Activated B cell treated with CpG ODN at 0.5 μM for 24 hours (primary cell): ENCODE measurements at regions of chr12 and their contacts with region 1.

Region 1: GRCh38 chr12:119980242-119980641 is 8.8 kb upstream of the BICDL1 start:
- DNase-seq: no peak
- ATAC-seq: no peak
- H3K4me3 Mint-ChIP-seq: no peak overlapping the region
- H3K27ac Mint-ChIP-seq: no peak overlapping the region
- H3K4me1 Mint-ChIP-seq: no peaks in the 10 kb centered on the region
- H3K27me3 Mint-ChIP-seq: peaks cover 30% of the 10 kb centered on the region
- CTCF ChIP-seq: no peak

Region 2: DNA sequence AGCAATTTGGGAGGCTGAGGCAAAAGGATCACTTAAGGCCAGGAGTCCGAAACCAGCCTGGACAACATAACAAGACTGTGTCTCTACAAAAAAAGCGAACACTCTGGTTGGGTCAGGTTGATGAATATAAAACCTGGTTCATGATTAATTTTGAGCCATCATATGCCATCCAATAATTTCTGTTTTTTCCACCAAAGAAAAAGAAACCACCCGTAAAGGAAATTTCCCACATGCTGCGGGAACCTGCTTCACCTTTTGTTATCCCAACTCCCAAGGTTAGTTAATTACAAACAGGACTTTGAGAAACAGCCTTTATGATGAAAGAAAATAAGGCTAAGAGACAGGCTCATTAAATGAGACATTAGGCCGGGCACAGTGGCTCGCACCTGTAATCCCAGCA is 15.3 kb before region 1 on chr12:
- CTCF ChIA-PET with region 1: no interaction called
- POLR2A ChIA-PET with region 1: interaction called, 10 read pairs
- intact Hi-C with region 1: no loop called
- DNase-seq: no peak
- ATAC-seq: no peak
- H3K4me3 Mint-ChIP-seq: no peak overlapping the region
- H3K27ac Mint-ChIP-seq: no peak overlapping the region
- H3K4me1 Mint-ChIP-seq: no peaks in the 10 kb centered on the region
- H3K27me3 Mint-ChIP-seq: peaks cover 4% of the 10 kb centered on the region
- CTCF ChIP-seq: no peak